ENCODE measurements at regions of chr10 and their contacts with region 1.

Region 1: GRCh38 chr10:112565434-112566053 is 118.5 kb downstream of the VTI1A start:
- DNase-seq: peak; percentile 67
- ATAC-seq: peak; percentile 81
- H3K4me3 ChIP-seq: no peak overlapping the region
- H3K27ac ChIP-seq: peak overlapping the region; percentile 0; the same call in 1 of the 2 replicates
- H3K4me1 ChIP-seq: peaks cover 32 to 41% of the 10 kb centered on the region in 2 experiments
- H3K27me3 ChIP-seq: no peaks in the 10 kb centered on the region
- CTCF ChIP-seq: peak; percentile 81 to 90 (median 87)
- POLR2A ChIP-seq: no peak
- RAD21 ChIP-seq: peak; percentile 96

Region 2: DNA sequence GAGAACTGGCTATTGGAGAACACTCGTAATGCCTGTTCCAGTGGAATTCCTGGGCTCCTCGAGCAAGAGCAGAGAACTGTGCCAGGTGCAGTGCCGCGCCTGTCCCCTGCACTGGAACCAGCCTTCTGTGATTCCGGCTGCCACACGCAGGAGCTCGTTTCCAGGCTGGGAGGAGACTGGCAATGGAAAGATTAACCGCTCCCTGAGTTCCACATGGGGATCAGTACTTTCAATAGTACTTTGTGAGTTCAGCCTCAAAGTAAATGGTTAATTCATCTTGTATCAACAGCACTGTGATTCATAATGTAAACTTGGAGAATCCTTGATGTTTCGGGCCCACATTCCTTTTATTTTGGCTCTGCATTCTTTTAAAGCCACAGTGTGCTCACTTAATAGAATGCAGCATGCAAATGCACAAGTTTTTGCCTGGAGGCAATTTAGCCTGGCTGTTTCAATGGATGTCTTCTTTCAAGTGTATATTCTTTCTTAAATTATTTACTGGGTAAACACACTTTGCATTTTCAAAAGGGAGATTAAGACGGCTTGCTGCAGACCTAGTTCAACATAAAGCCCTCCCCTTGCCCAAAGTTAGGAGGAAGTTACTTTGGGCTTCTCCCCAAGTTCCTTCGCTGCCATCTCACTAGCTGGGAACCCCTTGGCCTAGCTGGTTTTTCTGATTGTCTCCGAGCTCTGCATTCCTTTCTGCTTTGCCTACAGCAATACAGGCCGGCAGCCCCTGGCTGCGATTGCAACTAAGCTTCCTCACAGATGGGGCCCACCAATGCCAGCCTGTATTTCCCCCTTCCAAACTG is 246.4 kb after region 1 on chr10:
- CTCF ChIA-PET with region 1: no interaction called
- POLR2A ChIA-PET with region 1: no interaction called
- RAD21 ChIA-PET with region 1: no interaction called
- intact Hi-C with region 1: loop called (anchors 10 kb)
- DNase-seq: peak; percentile 91
- ATAC-seq: peak; percentile 84
- H3K4me3 ChIP-seq: peak overlapping the region; percentile 8 to 18; a peak in 2 of 4 replicates
- H3K27ac ChIP-seq: peak overlapping the region; percentile 78
- H3K4me1 ChIP-seq: peaks cover 77 to 87% of the 10 kb centered on the region in 2 experiments
- H3K27me3 ChIP-seq: no peaks in the 10 kb centered on the region
- CTCF ChIP-seq: no peak
- POLR2A ChIP-seq: no peak
- RAD21 ChIP-seq: peak; percentile 56

Region 3: GRCh38 chr10:112955582-112956421 is 390.3 kb after region 1 on chr10:
- CTCF ChIA-PET with region 1: interaction called, 3 read pairs
- POLR2A ChIA-PET with region 1: no interaction called
- RAD21 ChIA-PET with region 1: no interaction called
- intact Hi-C with region 1: loop called (anchors 2 kb)
- DNase-seq: no peak
- ATAC-seq: no peak
- H3K4me3 ChIP-seq: peak overlapping the region; percentile 73 to 78
- H3K27ac ChIP-seq: peak overlapping the region; percentile 100
- H3K4me1 ChIP-seq: peaks cover 73 to 81% of the 10 kb centered on the region in 2 experiments
- H3K27me3 ChIP-seq: no peaks in the 10 kb centered on the region
- CTCF ChIP-seq: no peak
- POLR2A ChIP-seq: no peak
- RAD21 ChIP-seq: no peak

Region 4: GRCh38 chr10:113108212-113108835 is 542.8 kb after region 1 on chr10:
- CTCF ChIA-PET with region 1: no interaction called
- POLR2A ChIA-PET with region 1: no interaction called
- RAD21 ChIA-PET with region 1: no interaction called
- intact Hi-C with region 1: loop called (anchors 10 kb)
- DNase-seq: no peak
- ATAC-seq: peak; percentile 87
- H3K4me3 ChIP-seq: no peak overlapping the region
- H3K27ac ChIP-seq: no peak overlapping the region
- H3K4me1 ChIP-seq: peaks cover 14 to 38% of the 10 kb centered on the region in 2 experiments; a peak in 3 of 4 replicates
- H3K27me3 ChIP-seq: no peaks in the 10 kb centered on the region
- CTCF ChIP-seq: peak in 2 of 3 experiments; percentile 94 to 98; a peak in 5 of 6 replicates
- POLR2A ChIP-seq: no peak
- RAD21 ChIP-seq: peak; percentile 71

Measured in HCT116 (cell line).